ENCODE measurements at regions of chr6 and their contacts with region 1.

Region 1: DNA sequence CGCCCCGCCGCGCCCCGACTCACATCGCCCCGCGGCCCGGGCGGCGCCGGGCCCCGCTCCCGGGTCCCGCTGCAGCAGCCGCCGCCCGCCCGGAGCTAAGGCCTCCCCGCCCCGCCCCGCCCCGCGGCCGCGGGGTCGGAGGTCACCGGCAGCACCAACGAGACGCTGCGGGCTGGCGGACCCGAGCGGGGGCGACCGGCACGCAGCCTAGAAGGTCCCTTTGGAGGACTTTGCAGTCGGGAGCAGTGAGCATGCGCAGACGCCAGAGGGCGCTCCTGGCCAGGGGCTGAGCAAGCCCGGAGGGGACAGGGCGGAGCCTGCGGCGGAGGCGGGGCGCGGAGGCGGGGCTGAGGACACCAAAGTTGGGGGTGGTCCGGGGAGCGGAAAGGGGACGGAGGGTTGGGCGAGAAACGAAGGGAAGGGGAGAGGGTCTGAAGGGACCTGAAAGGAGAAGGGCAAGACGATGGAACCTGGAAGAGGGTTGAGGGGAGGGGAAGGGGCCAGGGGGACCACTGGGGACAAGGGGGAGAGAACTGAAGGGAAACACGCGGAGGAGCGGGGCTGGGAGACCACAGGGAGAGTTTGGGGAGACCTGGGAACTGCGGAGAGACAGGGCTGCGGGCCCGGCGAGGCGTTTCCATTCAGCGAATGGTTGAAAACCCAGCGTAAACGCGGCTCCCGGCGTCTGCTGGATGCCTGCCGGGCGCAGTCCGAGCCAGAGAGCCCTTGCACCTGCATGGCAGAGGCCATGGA is at the start of gene FRS3:
- DNase-seq: peak; percentile 98
- ATAC-seq: peak; percentile 90 to 94
- H3K4me3 ChIP-seq: peak within 1 kb of the TSS; percentile 82 to 91 (median 86)
- H3K27ac ChIP-seq: peak within 1 kb of the TSS; percentile 83 to 90 (median 88)
- H3K4me1 ChIP-seq: peaks cover 19 to 24% of the 10 kb centered on the region in 2 donors
- H3K27me3 ChIP-seq: no peaks in the 10 kb centered on the region
- CTCF ChIP-seq: peak; percentile 93 to 97 (median 95)
- POLR2A ChIP-seq: peak in 1 of 2 donors; percentile 51
- total RNA-seq, gene FRS3: 2.9 to 6.9 (median 5.5) TPM

Region 2: DNA sequence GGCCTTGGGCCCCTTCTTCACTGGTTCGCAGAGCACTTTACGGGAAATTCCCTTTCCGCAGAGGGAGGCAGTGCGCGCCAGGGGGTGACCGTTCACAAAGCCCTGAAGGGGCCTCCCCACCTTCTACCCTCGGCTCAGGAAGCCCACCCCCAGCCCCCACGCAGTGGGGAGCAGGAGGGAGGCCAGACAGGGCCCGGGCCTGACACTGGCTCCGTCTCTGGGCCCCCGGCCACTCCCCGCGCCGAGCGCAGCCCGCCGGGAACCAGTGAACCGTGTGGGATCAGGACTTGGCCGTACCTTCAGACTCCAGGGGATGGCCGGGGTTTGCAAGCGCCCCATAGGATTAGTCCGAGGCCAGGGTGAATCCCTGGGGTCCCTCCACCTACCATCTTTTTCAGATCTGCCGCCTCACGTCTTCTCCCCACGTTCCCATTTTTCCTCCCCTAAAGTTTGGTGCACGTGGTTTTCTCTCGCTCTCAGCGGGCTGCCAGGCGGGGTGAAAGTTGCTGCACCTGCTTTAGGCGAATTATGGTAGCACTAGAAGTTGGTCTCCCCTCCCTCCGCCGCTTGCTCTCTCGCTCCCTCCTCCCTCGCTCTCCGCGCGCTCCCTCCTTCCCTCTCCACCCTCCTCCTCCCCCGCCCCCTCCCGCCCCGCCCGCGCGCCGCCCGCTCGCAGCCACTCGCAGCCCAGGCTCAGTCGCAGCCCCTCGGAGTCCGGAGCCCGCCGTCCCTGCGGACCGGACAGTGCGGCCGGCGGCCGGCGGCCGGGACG is 234.1 kb before region 1 on chr6 and contains the start of gene FOXP4:
- in situ Hi-C with region 1: no loop called
- intact Hi-C with region 1: loop called (anchors 5 kb)
- DNase-seq: peak; percentile 86 to 87
- ATAC-seq: peak; percentile 90 to 91
- H3K4me3 ChIP-seq: peak within 1 kb of the TSS; percentile 64 to 82 (median 69)
- H3K27ac ChIP-seq: peak within 1 kb of the TSS; percentile 72 to 89 (median 79)
- H3K4me1 ChIP-seq: peaks cover 21 to 45% of the 10 kb centered on the region in 2 donors
- H3K27me3 ChIP-seq: no peaks in the 10 kb centered on the region
- CTCF ChIP-seq: no peak
- POLR2A ChIP-seq: no peak
- total RNA-seq, gene FOXP4: 3.4 to 11.4 (median 6.5) TPM

Region 3: GRCh38 chr6:41602864-41603608 is 176.9 kb before region 1 on chr6:
- in situ Hi-C with region 1: loop called in 2 of 4 experiments (anchors 10 kb)
- intact Hi-C with region 1: loop called (anchors 5 kb)
- DNase-seq: peak; percentile 57 to 69
- ATAC-seq: peak; percentile 90 to 91
- H3K4me3 ChIP-seq: peak overlapping the region in 1 of 4 donors; percentile 8
- H3K27ac ChIP-seq: no peak overlapping the region
- H3K4me1 ChIP-seq: peaks cover 0 to 8% of the 10 kb centered on the region in 2 donors
- H3K27me3 ChIP-seq: no peaks in the 10 kb centered on the region
- CTCF ChIP-seq: peak; percentile 83 to 94 (median 85)
- POLR2A ChIP-seq: no peak

Region 4: DNA sequence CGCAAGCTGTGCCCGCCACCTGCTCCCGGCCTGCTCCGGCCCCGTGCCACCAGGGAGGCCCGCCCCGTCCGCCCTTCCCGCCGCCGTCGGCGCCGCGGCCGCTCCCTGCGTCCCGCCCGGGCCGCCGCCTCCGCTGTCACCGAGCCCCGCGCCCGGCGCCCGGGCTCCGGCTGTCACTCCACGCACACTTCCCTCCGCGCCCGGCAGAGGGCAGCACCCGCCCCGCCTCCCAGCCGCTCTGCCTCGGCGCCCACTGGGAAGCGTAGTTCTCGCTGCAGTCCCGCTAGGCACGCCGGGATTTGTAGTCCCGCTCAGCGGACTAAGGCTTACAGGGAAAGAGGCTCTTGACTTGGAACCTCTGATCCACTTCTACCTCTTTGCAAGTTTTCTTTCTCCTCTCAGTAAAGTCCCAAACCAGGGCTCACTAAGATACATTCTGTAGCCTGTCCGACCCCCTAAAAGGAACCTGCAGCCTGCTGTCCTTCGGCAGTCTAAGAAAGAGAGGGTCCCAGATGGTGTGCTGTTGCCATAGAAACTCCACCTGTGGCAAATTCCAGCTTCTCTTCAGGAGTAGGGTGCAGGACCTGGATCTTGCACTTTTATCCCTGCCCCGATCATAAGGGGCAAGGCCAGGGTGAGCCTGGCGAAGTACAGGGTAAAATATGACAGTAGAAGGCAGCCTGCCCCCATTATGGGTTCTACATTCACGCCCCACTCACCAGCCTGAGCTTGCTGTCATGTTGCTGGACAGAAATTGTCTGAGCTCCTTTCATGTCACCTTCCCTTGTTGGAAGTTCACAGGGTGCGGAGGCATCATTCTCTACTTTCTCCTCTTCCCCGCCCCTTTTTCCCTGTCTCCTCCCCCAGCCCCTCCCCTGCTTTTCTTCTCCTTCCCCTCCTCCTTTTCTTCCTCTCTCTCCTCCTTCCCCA is 44.3 kb before region 1 on chr6 and contains the start of gene TFEB:
- in situ Hi-C with region 1: no loop called
- intact Hi-C with region 1: loop called (anchors 1 kb)
- DNase-seq: peak; percentile 92 to 93
- ATAC-seq: peak; percentile 43 to 51
- H3K4me3 ChIP-seq: peak within 1 kb of the TSS; percentile 76 to 97 (median 90)
- H3K27ac ChIP-seq: peak within 1 kb of the TSS; percentile 97 to 99 (median 98)
- H3K4me1 ChIP-seq: peaks cover 12 to 19% of the 10 kb centered on the region in 2 donors
- H3K27me3 ChIP-seq: no peaks in the 10 kb centered on the region
- CTCF ChIP-seq: peak; percentile 91 to 100 (median 100)
- POLR2A ChIP-seq: peak; percentile 94 to 97
- total RNA-seq, gene TFEB: 82.8 to 121 (median 93.3) TPM